Caco-2 (cell line): ENCODE measurements at regions of chrX and their contacts with region 1.

Region 1: GRCh38 chrX:10939384-10939897 is 171.7 kb upstream of the HCCS start:
- DNase-seq: peak; percentile 48 to 57
- H3K4me3 ChIP-seq: no peak overlapping the region
- H3K4me3 Mint-ChIP-seq: peak overlapping the region; percentile 9
- H3K27ac Mint-ChIP-seq: peak overlapping the region; percentile 47
- H3K4me1 ChIP-seq: peaks cover 13% of the 10 kb centered on the region
- H3K4me1 Mint-ChIP-seq: peaks cover 23% of the 10 kb centered on the region
- H3K27me3 ChIP-seq: no peaks in the 10 kb centered on the region
- H3K27me3 Mint-ChIP-seq: no peaks in the 10 kb centered on the region
- CTCF ChIP-seq: no peak

Region 2: GRCh38 chrX:10755439-10756334 is 183.8 kb before region 1 on chrX:
- CTCF ChIA-PET with region 1: no interaction called
- POLR2A ChIA-PET with region 1: no interaction called
- intact Hi-C with region 1: loop called (anchors 10 kb)
- DNase-seq: peak; percentile 45 to 67
- H3K4me3 ChIP-seq: no peak overlapping the region
- H3K4me3 Mint-ChIP-seq: peak overlapping the region; percentile 63
- H3K27ac Mint-ChIP-seq: peak overlapping the region; percentile 67
- H3K4me1 ChIP-seq: peaks cover 24% of the 10 kb centered on the region
- H3K4me1 Mint-ChIP-seq: peaks cover 7% of the 10 kb centered on the region
- H3K27me3 ChIP-seq: no peaks in the 10 kb centered on the region
- H3K27me3 Mint-ChIP-seq: no peaks in the 10 kb centered on the region
- CTCF ChIP-seq: no peak

Region 3: DNA sequence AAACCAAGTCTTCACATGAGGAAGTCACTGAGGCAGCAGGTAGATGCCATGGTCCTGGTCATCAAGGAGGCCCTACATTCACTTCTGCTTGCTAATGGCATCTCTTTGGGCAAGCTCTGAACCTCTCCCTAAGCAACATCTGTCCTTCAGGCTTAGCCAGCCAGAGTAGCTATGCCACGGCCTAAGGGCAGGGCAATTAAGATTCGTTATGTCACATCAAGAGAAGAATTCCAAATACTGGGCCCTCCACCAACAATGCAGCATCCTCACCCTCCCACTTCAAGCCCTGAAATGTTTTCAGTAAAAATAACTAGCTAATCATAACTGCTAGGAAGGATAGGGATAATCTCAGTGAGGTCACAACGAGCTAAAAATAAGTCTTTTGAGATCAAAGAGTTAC is 51.0 kb after region 1 on chrX:
- CTCF ChIA-PET with region 1: no interaction called
- POLR2A ChIA-PET with region 1: interaction called, 3 read pairs
- intact Hi-C with region 1: loop called (anchors 5 kb)
- DNase-seq: no peak
- H3K4me3 ChIP-seq: no peak overlapping the region
- H3K4me3 Mint-ChIP-seq: no peak overlapping the region
- H3K27ac Mint-ChIP-seq: no peak overlapping the region
- H3K4me1 ChIP-seq: peaks cover 59% of the 10 kb centered on the region
- H3K4me1 Mint-ChIP-seq: peaks cover 28% of the 10 kb centered on the region
- H3K27me3 ChIP-seq: no peaks in the 10 kb centered on the region
- H3K27me3 Mint-ChIP-seq: no peaks in the 10 kb centered on the region
- CTCF ChIP-seq: no peak

Region 4: GRCh38 chrX:11143931-11144678 is 204.7 kb after region 1 on chrX:
- CTCF ChIA-PET with region 1: no interaction called
- POLR2A ChIA-PET with region 1: no interaction called
- intact Hi-C with region 1: no loop called
- DNase-seq: peak; percentile 56 to 69
- H3K4me3 ChIP-seq: no peak overlapping the region
- H3K4me3 Mint-ChIP-seq: no peak overlapping the region
- H3K27ac Mint-ChIP-seq: no peak overlapping the region
- H3K4me1 ChIP-seq: no peaks in the 10 kb centered on the region
- H3K4me1 Mint-ChIP-seq: peaks cover 6% of the 10 kb centered on the region
- H3K27me3 ChIP-seq: no peaks in the 10 kb centered on the region
- H3K27me3 Mint-ChIP-seq: no peaks in the 10 kb centered on the region
- CTCF ChIP-seq: peak; percentile 39 to 52